Stomach (tissue), 19 donors: ENCODE measurements at regions of chr9 and their contacts with region 1.

Region 1: DNA sequence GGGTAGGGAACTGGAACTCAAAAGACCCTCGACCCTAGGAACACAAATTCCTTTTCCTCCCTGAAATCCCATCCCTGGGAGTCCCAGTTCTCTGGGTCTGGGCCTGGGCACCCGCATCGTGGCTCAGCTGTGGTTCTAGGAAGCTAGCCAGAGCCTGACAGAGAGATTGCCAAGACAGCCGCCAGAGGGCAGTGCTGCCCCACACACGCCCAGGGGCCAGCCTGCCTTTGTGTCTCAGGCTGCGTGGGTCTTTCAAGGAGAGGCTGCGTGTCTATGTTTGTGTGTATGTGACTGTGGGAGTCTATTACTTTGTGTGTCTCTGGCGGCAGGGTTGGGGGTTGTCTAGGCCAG is 32.0 kb upstream of the TTLL11 start:
- DNase-seq: peak; percentile 83 to 92
- H3K4me3 ChIP-seq: no peak overlapping the region
- H3K27ac ChIP-seq: no peak overlapping the region
- H3K4me1 ChIP-seq: peaks cover 15 to 26% (median 19%) of the 10 kb centered on the region in 4 donors
- H3K27me3 ChIP-seq: peaks cover 0 to 36% (median 20%) of the 10 kb centered on the region in 3 donors
- CTCF ChIP-seq: peak in 6 of 7 experiments; percentile 44 to 98 (median 94)
- EP300 ChIP-seq: no peak
- POLR2A ChIP-seq: no peak

Region 2: DNA sequence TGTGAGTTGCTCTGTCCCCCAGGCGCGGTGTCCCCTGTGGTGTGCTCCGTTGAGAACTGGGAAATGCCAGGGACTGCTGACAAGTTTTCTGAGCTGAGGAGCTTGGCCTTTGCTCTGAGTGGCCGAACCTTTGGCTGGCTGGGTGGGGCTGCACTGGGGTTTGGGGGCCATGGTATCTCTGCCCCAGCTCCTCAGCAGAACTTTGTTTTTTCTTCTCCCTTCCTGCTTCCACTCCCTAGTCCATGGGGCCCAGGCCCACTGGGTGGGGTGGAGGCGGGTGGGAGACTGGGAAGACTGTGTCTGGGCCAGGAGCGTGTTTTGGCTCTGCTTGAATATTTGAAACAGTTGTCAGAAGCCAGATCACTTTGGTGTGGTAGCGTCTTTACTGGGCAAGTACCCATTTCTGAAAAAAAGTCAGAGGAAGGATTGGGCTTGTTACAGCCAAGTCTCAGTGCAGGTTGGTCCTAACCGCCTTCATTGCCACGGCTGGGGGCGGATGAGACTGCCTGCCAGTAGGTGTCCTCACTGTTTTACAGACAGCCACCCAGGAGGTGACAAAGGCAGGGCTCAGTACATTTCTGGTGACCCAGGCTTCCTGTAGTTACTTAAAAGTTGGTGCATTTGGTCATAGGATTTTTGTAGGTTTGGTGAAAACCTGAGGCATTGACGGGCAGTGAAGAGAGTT is 381.0 kb before region 1 on chr9:
- intact Hi-C with region 1: no loop called
- DNase-seq: peak; percentile 73 to 87
- H3K4me3 ChIP-seq: peak overlapping the region; percentile 45 to 53 (median 50)
- H3K27ac ChIP-seq: peak overlapping the region; percentile 89 to 94 (median 93)
- H3K4me1 ChIP-seq: peaks cover 87 to 99% (median 95%) of the 10 kb centered on the region in 4 donors
- H3K27me3 ChIP-seq: no peaks in the 10 kb centered on the region
- CTCF ChIP-seq: peak in 5 of 7 experiments; percentile 31 to 62 (median 34)
- EP300 ChIP-seq: no peak
- POLR2A ChIP-seq: no peak

Region 3: DNA sequence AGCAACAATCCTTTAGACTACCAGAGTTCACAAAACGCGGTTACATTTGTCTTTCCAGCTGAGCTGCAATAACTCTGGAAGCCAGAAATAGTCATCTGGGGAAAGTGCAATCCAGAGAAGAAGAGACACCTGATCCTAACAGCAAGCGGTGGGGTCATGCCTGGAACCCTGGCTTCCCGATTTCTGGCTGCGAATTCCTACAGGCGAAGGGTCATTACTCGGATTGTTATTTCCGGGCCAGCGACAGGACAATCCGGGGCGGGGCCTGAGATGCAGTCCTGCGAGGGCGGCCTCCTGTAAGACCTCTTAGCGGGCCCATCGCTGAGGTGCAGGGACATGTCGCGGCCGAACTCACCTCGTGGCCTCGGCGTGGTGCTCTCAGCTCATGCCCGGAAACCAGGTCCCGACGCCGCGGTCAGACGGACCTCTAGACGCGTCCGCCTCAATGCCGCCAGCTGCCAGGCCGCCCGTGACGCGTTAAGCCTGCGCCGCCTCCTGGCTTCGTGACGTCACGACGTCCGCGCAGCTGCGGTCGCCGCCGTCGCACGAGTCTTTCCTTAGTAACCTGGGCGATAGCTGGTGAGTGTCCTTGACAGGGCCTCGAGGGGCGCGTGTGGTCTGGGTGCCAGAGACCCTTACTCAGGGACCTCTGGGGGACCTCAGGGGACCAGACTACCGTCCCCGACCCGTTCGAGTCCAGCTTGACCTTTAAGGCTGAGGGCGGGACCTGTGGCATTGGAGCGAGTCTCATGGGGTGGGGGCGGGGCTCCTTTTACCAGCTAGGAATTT is 139.4 kb after region 1 on chr9 and contains the starts of genes MRRF and RBM18:
- intact Hi-C with region 1: loop called (anchors 10 kb)
- DNase-seq: peak; percentile 94 to 98
- H3K4me3 ChIP-seq: peak within 1 kb of the TSS; percentile 60 to 77 (median 71)
- H3K27ac ChIP-seq: peak within 1 kb of the TSS; percentile 92 to 96 (median 95)
- H3K4me1 ChIP-seq: peaks cover 35 to 59% (median 48%) of the 10 kb centered on the region in 4 donors
- H3K27me3 ChIP-seq: no peaks in the 10 kb centered on the region
- CTCF ChIP-seq: no peak
- EP300 ChIP-seq: no peak
- POLR2A ChIP-seq: no peak
- total RNA-seq, gene MRRF: 7.1 to 98.6 (median 38.7) TPM
- total RNA-seq, gene RBM18: 1.8 to 13.6 (median 6.4) TPM

Region 4: GRCh38 chr9:122350638-122351355 is 225.7 kb after region 1 on chr9:
- intact Hi-C with region 1: loop called (anchors 2 kb)
- DNase-seq: peak; percentile 84 to 92
- H3K4me3 ChIP-seq: no peak overlapping the region
- H3K27ac ChIP-seq: no peak overlapping the region
- H3K4me1 ChIP-seq: peaks cover 5 to 26% (median 17%) of the 10 kb centered on the region in 4 donors
- H3K27me3 ChIP-seq: no peaks in the 10 kb centered on the region
- CTCF ChIP-seq: peak in 6 of 7 experiments; percentile 87 to 96 (median 93)
- EP300 ChIP-seq: no peak
- POLR2A ChIP-seq: no peak

Region 5: DNA sequence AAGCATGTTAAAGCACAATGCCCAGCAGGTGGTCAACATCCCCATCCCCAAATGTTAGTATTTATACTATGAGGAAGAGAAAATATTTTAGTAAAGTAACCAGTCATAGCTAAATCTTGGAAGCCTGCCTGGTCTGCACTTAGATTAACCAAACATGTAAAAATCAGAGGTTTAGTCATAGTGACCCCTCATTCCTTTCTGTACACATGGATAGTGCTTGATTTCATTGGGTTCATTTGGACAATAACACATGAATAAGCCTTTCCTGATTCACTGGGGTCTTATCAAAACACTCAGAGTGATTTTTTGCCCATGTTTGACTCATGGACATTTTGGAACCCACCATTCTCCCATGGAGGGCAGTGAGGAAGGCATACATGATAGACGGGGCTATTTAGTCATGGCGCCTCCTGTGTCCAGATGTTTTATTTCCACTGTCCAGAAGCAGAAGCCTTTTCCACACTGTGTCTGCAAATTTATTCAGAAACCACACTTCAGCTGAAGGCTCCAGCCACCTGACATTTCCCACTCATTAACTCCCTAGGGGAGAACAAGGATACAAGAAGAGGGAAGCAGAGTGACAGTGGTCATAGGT is 320.1 kb after region 1 on chr9:
- intact Hi-C with region 1: loop called (anchors 10 kb)
- DNase-seq: peak in 1 of 2 donors; percentile 14
- H3K4me3 ChIP-seq: no peak overlapping the region
- H3K27ac ChIP-seq: peak overlapping the region; percentile 39 to 72 (median 54)
- H3K4me1 ChIP-seq: peaks cover 0 to 18% (median 9%) of the 10 kb centered on the region in 4 donors
- H3K27me3 ChIP-seq: no peaks in the 10 kb centered on the region
- CTCF ChIP-seq: no peak
- EP300 ChIP-seq: no peak
- POLR2A ChIP-seq: no peak